Activated naive CD4-positive, alpha-beta T cell treated with anti-CD3 and anti-CD28 coated beads, Interleukin-2, amount 10 ng/mL, durations not matched to agents 7 days and 5 days (primary cell): ENCODE measurements at regions of chr19 and their contacts with region 1.

Region 1: GRCh38 chr19:49006926-49007325 is 10.0 kb downstream of the LHB start:
- DNase-seq: no peak
- H3K4me3 Mint-ChIP-seq: no peak overlapping the region
- H3K27ac Mint-ChIP-seq: no peak overlapping the region
- H3K4me1 Mint-ChIP-seq: no peaks in the 10 kb centered on the region
- H3K27me3 Mint-ChIP-seq: no peaks in the 10 kb centered on the region

Region 2: GRCh38 chr19:48933382-48933932 is 73.5 kb before region 1 on chr19 and contains the start of gene DHDH:
- CTCF ChIA-PET with region 1: no interaction called
- DNase-seq: peak; percentile 93
- H3K4me3 Mint-ChIP-seq: peak within 1 kb of the TSS; percentile 64
- H3K27ac Mint-ChIP-seq: peak within 1 kb of the TSS; percentile 79
- H3K4me1 Mint-ChIP-seq: peaks cover 22% of the 10 kb centered on the region
- H3K27me3 Mint-ChIP-seq: peaks cover 22% of the 10 kb centered on the region

Region 3: DNA sequence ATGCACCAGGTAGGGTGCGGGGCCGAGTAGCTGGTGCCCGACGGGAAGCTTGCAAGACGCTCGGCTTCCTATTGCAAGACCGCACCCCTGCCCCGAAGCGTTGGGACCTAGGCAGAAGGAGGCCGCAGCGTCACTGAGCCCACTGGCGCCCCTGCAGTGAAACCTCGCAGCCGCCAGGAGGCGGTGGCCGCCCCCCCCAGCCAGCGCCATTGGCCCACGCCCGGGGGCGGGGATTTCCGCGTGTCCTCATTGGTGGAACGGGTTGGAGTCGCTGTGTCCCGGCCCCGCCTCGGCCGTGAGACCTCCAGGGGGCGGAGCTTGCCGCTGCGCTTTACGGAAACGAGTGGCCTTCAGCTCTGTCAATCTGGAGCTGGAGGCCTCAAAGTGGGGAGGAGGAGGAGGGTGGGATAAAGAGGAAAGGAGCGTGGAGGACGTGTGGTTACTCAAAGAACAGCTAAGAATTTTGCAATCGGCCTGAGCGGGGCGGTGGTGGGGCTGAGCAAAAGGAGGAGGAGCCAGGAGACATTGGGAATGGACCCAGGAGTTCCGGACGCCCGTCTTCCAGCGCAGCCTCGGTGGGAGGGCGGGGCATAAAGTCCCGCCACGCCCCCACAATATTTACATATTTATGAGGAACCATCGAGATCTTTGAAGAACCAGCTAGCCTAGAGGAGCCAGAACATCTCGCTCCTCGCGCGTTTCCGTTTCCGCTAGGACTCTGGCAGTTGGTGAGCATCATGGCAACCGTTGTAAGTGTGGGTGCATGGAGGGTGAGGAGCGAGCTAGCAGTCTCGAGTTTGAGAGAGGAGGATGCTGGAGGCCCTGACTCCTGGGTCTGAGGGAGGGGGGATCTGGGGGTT is 13.5 kb before region 1 on chr19 and contains the starts of genes GYS1 and RUVBL2:
- CTCF ChIA-PET with region 1: interaction called, 27 read pairs
- DNase-seq: peak; percentile 99
- H3K4me3 Mint-ChIP-seq: peak within 1 kb of the TSS; percentile 94
- H3K27ac Mint-ChIP-seq: peak within 1 kb of the TSS; percentile 97
- H3K4me1 Mint-ChIP-seq: peaks cover 49% of the 10 kb centered on the region
- H3K27me3 Mint-ChIP-seq: no peaks in the 10 kb centered on the region